ENCODE measurements at regions of chr19 and their contacts with region 1.

Region 1: GRCh38 chr19:39532233-39533002 is at the start of gene EID2B:
- DNase-seq: peak; percentile 89
- H3K4me3 ChIP-seq: peak within 1 kb of the TSS; percentile 67 to 99 (median 78)
- H3K27ac ChIP-seq: peak within 1 kb of the TSS; percentile 46
- H3K4me1 ChIP-seq: peaks cover 7% of the 10 kb centered on the region
- H3K27me3 ChIP-seq: no peaks in the 10 kb centered on the region
- CTCF ChIP-seq: peak; percentile 98 to 100
- total RNA-seq, gene EID2B: 2.5 to 3.3 TPM

Region 2: DNA sequence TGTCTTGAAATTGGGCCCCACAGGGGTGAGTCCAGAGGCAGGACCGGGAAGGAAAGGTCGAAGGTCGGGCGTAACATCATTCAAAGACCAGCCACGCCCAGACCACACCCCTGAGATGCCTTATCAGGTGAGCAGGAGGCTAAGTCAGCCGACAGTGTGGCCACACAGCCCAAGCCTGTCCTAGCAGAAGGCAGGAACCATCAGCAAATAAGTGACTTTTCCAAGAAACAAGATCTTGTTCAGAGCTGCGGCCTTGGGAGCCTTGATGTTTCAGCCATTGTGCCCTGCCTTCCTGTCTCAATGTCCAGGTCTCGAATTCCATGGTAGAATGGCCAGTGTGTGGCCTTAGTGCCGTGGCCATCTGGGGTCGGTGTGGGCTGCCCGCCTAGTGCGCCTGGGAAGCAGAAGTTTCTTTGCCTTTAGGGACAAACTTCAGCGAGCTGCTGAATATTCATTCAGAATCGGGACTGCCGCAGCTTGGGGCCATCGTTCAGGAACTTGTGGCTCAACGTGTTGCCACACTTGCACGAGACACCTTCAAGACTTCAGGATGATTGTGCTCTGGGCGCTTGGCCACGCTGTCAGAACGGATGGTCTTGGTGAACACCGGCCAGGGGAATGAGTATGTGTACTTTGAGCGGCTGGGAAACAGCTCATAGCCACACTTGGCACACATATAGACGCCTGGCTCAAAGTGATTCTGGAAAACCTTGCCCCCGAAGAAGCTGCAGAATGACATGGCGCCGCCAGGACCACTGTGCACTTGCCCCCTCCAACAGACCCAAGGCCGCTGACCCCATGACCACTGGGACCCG is 277.7 kb before region 1 on chr19:
- CTCF ChIA-PET with region 1: no interaction called
- dilution Hi-C with region 1: loop called (anchors 10 kb)
- in situ Hi-C with region 1: no loop called
- intact Hi-C with region 1: no loop called
- DNase-seq: no peak
- H3K4me3 ChIP-seq: no peak overlapping the region
- H3K27ac ChIP-seq: no peak overlapping the region
- H3K4me1 ChIP-seq: no peaks in the 10 kb centered on the region
- H3K27me3 ChIP-seq: no peaks in the 10 kb centered on the region
- CTCF ChIP-seq: no peak

Region 3: DNA sequence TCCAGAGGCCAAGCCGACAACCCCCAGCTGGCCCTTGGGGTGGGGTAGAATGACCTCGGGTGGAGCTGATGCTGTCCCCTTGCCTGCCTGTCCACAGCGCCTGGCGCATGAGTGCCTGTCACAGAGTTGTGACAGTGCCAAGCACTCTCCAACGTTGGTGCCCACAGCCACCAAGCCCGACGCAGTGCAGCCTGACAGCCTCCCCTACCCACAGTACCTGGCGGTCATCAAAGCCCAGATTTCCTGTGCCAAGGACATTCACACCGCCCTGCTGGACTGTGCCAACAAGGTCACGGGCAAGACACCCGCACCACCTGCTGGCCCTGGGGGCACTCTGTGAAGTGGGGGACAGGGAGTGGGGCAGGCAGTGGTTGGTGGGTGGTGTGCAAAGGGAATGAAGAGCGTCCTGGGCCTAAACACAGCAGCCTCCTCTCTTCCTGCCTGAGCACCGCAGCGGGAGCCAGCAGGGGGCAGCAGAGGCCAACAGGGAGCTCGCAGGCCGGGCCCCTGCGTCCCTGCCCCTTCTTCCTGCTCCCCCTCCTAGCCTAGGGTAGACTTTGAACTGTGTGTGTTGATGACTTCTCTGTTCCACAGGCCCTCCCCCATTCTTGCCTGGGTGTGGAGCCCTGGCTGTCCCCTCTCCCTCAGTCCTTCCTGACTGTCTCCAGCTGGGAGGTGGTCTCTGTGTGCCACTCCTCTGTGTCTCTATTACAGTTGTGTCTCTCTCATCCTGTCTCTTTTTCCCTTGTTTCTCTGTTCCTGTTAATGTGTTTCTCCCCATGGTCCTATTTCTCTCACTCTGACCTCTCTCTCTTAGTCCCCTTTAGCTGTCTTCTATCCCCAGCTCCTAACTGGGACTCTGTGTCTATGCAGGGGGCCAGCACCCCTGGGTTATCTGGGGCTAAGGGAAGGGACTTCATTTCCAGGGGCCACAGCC is 134.8 kb before region 1 on chr19:
- CTCF ChIA-PET with region 1: no interaction called
- dilution Hi-C with region 1: no loop called
- in situ Hi-C with region 1: no loop called
- intact Hi-C with region 1: loop called (anchors 2 kb)
- DNase-seq: peak; percentile 75
- H3K4me3 ChIP-seq: no peak overlapping the region
- H3K27ac ChIP-seq: peak overlapping the region; percentile 97
- H3K4me1 ChIP-seq: peaks cover 32% of the 10 kb centered on the region
- H3K27me3 ChIP-seq: no peaks in the 10 kb centered on the region
- CTCF ChIP-seq: peak; percentile 97 to 99

Region 4: GRCh38 chr19:39445265-39446111 is 86.9 kb before region 1 on chr19 and contains the start of gene SUPT5H:
- CTCF ChIA-PET with region 1: interaction called, 4 read pairs
- dilution Hi-C with region 1: no loop called
- in situ Hi-C with region 1: loop called (anchors 5 kb)
- intact Hi-C with region 1: loop called (anchors 1 kb)
- DNase-seq: peak; percentile 97
- H3K4me3 ChIP-seq: peak within 1 kb of the TSS; percentile 78 to 93 (median 90)
- H3K27ac ChIP-seq: peak within 1 kb of the TSS; percentile 81
- H3K4me1 ChIP-seq: peaks cover 27% of the 10 kb centered on the region
- H3K27me3 ChIP-seq: no peaks in the 10 kb centered on the region
- CTCF ChIP-seq: no peak
- total RNA-seq, gene SUPT5H: 66.7 to 120 TPM

Region 5: GRCh38 chr19:39480337-39481228 is 51.8 kb before region 1 on chr19 and contains the start of gene TIMM50:
- CTCF ChIA-PET with region 1: no interaction called
- dilution Hi-C with region 1: loop called (anchors 10 kb)
- in situ Hi-C with region 1: no loop called
- intact Hi-C with region 1: loop called (anchors 1 kb)
- DNase-seq: peak; percentile 91
- H3K4me3 ChIP-seq: peak within 1 kb of the TSS; percentile 64 to 89 (median 77)
- H3K27ac ChIP-seq: peak within 1 kb of the TSS; percentile 88
- H3K4me1 ChIP-seq: peaks cover 13% of the 10 kb centered on the region
- H3K27me3 ChIP-seq: no peaks in the 10 kb centered on the region
- CTCF ChIP-seq: no peak
- total RNA-seq, gene TIMM50: 36.0 to 96.0 TPM

Measured in mammary epithelial cell (primary cell).